ENCODE measurements at regions of chr2 and their contacts with region 1.

Region 1: DNA sequence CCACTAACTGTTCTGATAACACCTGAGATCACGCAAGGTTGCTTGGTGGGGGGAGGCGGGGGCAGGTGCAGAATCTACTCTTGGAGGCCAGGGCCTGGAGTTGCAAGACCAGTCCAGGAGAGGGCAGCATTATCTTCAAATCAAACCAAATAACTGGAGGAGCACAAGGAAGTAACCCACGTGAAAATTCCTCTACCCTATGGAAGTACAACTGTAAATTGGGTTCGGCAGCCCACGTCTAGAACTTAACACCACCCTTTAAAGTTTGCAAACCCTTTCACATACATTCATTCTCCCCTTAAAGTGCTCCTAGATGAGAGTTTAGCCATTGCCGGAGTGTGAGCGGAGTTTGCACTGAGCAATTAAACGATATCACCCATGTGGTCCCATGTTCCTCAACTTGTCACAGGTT is 19.6 kb upstream of the CXCR1 start:
- DNase-seq: peak; percentile 73
- H3K4me3 ChIP-seq: no peak overlapping the region
- H3K27ac ChIP-seq: no peak overlapping the region
- H3K4me1 ChIP-seq: no peaks in the 10 kb centered on the region
- H3K27me3 ChIP-seq: peaks cover 3 to 10% of the 10 kb centered on the region in 2 experiments
- CTCF ChIP-seq: peak; percentile 76 to 77
- POLR2A ChIP-seq: no peak

Region 2: DNA sequence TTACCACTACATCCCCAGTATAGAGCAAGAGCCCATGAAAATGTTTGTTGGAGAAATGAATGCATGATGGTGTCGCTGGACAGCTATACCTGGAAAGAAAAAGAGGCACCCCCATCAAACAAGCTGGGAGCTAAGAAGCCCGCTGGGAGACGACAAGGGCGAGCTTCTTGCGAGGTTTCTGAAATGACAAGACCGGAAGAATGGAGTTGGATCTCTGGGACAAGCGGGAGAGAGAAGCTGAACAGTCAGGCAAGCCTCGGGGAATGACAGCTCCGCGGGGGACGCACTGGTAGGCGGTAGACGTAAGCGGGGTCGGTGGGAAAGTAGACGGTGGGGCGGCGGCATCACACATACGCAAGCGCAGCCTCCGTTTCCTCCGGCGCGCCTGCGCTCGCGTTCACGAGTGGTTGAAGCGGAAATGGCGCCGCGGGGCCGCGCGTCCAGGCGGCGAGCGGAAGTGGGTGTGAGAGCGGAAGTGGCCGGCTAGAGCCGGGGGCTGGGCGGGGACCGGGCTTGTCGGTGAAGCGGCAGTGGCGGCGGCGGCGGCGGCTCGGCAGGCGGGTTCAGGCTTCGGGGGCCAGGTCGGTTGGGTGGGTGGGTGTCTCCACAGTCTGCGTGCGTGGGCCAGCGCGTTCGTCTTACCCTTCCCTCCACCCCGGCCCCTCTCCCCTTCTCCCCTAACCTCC is 30.5 kb after region 1 on chr2 and contains the start of gene ARPC2:
- CTCF ChIA-PET with region 1: interaction called, 3 read pairs
- POLR2A ChIA-PET with region 1: no interaction called
- dilution Hi-C with region 1: no loop called
- intact Hi-C with region 1: loop called (anchors 1 kb)
- DNase-seq: peak; percentile 97
- H3K4me3 ChIP-seq: peak within 1 kb of the TSS; percentile 81 to 96 (median 88)
- H3K27ac ChIP-seq: peak within 1 kb of the TSS; percentile 70
- H3K4me1 ChIP-seq: peaks cover 32% of the 10 kb centered on the region
- H3K27me3 ChIP-seq: peaks cover 0 to under 1% of the 10 kb centered on the region in 2 experiments
- CTCF ChIP-seq: no peak
- POLR2A ChIP-seq: peak; percentile 89
- total RNA-seq, gene ARPC2: 455 and 483 TPM in 2 replicates

Region 3: DNA sequence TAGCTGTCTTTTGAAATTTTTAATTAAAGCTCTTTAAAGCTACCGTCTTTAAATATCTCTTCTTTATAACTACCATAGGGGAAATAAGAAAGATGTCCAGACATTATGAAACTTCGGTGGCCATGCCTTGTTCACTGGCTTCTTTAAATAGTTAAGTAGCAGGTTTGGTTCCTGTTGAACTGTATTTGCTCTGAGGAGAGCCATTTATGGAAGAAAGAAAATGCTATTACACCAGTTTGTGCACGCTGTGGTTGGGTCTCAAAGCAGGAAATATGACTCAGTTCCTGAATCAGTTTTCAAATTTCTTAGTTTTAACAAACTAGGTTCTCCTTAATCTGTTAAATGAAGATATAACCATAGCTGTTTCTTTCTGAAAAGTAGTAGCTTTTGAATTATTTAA is 42.9 kb after region 1 on chr2:
- CTCF ChIA-PET with region 1: interaction called, 3 read pairs
- POLR2A ChIA-PET with region 1: no interaction called
- dilution Hi-C with region 1: no loop called
- intact Hi-C with region 1: loop called (anchors 1 kb)
- DNase-seq: peak; percentile 88
- H3K4me3 ChIP-seq: peak overlapping the region in 1 of 3 experiments; percentile 39
- H3K27ac ChIP-seq: peak overlapping the region; percentile 70
- H3K4me1 ChIP-seq: peaks cover 31% of the 10 kb centered on the region
- H3K27me3 ChIP-seq: no peaks in the 10 kb centered on the region
- CTCF ChIP-seq: no peak
- POLR2A ChIP-seq: no peak

Region 4: GRCh38 chr2:218245214-218245613 is 58.9 kb after region 1 on chr2:
- CTCF ChIA-PET with region 1: no interaction called
- POLR2A ChIA-PET with region 1: no interaction called
- dilution Hi-C with region 1: no loop called
- intact Hi-C with region 1: loop called (anchors 2 kb)
- DNase-seq: no peak
- H3K4me3 ChIP-seq: no peak overlapping the region
- H3K27ac ChIP-seq: no peak overlapping the region
- H3K4me1 ChIP-seq: no peaks in the 10 kb centered on the region
- H3K27me3 ChIP-seq: no peaks in the 10 kb centered on the region
- CTCF ChIP-seq: no peak
- POLR2A ChIP-seq: no peak

Region 5: DNA sequence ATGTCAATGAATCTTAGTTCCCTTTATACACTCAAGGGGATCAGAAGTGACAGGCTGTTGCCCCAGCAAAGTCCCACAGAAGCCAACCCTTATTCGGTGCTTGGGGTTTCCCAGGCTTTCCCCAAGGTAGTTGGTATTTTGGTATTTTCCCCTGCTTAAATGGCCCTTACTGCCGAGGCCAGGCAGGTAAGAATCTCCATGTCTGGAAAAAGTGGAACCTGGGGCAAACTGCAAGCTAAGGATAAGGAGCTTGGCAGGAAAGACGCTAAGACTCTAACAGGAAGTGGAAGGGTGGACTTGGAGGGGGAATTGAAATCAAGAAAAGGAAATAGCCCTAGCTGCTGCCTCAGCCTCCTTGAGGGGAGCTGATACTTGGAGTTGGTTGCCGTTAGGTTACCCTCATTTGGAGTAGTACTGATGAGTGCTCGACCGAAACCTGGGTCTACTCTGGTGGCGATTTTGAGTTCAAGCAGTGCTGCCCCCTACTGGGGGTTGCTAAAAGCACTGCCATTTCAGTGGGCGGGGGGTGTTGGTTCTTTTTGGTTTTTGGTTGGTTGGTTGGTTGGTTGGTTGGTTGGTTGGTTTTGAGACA is 71.1 kb after region 1 on chr2:
- CTCF ChIA-PET with region 1: interaction called, 4 read pairs
- POLR2A ChIA-PET with region 1: no interaction called
- dilution Hi-C with region 1: no loop called
- intact Hi-C with region 1: loop called (anchors 1 kb)
- DNase-seq: peak; percentile 24
- H3K4me3 ChIP-seq: no peak overlapping the region
- H3K27ac ChIP-seq: no peak overlapping the region
- H3K4me1 ChIP-seq: peaks cover 17% of the 10 kb centered on the region
- H3K27me3 ChIP-seq: no peaks in the 10 kb centered on the region
- CTCF ChIP-seq: peak; percentile 60 to 69
- POLR2A ChIP-seq: peak; percentile 24

Region 6: GRCh38 chr2:218466016-218466521 is 279.7 kb after region 1 on chr2:
- CTCF ChIA-PET with region 1: no interaction called
- POLR2A ChIA-PET with region 1: no interaction called
- dilution Hi-C with region 1: no loop called
- intact Hi-C with region 1: loop called (anchors 5 kb)
- DNase-seq: peak; percentile 52
- H3K4me3 ChIP-seq: no peak overlapping the region
- H3K27ac ChIP-seq: no peak overlapping the region
- H3K4me1 ChIP-seq: no peaks in the 10 kb centered on the region
- H3K27me3 ChIP-seq: no peaks in the 10 kb centered on the region
- CTCF ChIP-seq: peak in 1 of 2 donors; percentile 23
- POLR2A ChIP-seq: no peak

Measured in endothelial cell of umbilical vein (primary cell).